OCI-LY7 (cell line): ENCODE measurements at regions of chr11 and their contacts with region 1.

Region 1: DNA sequence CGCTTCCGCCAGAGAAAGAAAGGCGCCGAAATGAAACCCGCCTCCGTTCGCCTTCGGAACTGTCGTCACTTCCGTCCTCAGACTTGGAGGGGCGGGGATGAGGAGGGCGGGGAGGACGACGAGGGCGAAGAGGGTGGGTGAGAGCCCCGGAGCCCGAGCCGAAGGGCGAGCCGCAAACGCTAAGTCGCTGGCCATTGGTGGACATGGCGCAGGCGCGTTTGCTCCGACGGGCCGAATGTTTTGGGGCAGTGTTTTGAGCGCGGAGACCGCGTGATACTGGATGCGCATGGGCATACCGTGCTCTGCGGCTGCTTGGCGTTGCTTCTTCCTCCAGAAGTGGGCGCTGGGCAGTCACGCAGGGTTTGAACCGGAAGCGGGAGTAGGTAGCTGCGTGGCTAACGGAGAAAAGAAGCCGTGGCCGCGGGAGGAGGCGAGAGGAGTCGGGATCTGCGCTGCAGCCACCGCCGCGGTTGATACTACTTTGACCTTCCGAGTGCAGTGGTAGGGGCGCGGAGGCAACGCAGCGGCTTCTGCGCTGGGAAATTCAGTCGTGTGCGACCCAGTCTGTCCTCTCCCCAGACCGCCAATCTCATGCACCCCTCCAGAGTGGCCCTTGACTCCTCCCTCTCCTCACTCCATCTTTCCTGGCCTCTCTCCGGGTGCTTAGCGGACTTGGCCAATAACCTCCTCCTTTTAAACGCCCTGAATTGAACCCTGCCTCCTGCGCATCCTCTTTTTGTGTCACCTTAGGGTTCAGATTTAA is at the start of gene ATM:
- DNase-seq: peak; percentile 98
- H3K4me3 ChIP-seq: peak within 1 kb of the TSS; percentile 93
- H3K27ac ChIP-seq: peak within 1 kb of the TSS; percentile 90
- H3K4me1 ChIP-seq: peaks cover 40% of the 10 kb centered on the region
- CTCF ChIP-seq: peak; percentile 79
- total RNA-seq, gene ATM: 125 and 147 TPM in 2 replicates

Region 2: DNA sequence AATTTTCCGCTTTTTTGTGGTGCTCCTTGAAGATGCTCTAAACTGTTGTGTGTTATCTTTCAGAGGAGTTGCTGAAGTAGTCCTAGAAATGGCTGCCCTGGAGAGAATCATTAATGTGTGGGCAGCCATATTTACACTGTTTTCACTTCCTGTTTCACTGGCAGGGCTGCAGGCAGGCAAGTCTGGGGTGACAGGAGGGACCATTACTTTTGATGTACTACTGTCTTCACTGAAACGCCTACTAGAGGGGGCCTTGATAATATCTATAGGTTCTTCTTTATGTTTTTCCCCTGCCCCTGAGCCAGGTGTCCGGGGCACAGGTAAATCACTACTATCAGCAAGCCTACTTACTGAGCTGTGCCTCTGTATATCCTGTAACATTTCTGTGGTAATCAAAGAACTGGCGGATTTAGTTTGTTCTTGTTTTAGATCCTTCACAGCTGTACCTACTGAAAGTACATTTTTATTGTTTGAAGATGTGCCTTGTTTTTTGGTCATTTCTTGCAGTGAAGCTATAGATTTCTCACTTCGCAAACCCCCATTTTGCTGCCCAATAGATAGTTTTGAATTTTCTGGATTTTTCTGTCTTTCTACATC is 61.8 kb before region 1 on chr11:
- CTCF ChIA-PET with region 1: no interaction called
- POLR2A ChIA-PET with region 1: no interaction called
- intact Hi-C with region 1: loop called (anchors 1 kb)
- DNase-seq: peak; percentile 89
- H3K4me3 ChIP-seq: peak overlapping the region; percentile 30
- H3K27ac ChIP-seq: peak overlapping the region; percentile 88
- H3K4me1 ChIP-seq: peaks cover 46% of the 10 kb centered on the region
- CTCF ChIP-seq: peak; percentile 58

Region 3: DNA sequence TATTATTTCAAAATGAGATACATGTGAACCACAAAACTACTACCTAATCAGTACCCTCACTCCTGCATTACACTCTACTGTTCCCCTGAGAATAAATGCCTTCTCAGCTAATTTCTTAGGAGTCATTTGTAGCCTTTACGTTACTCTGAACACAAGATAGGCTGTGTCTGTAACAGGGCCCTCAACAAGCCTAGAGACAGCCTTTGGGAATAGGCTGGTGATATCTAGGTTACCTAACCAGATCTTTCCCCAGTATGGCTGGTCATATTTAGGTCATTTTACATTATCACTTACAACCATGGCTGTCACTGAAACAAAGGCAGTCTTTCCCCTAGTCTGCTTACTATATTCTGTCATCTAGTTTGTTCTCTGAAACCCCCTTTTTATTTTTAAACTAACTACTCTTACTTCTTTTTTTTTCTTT is 14.2 kb after region 1 on chr11:
- CTCF ChIA-PET with region 1: no interaction called
- POLR2A ChIA-PET with region 1: interaction called, 58 read pairs
- intact Hi-C with region 1: loop called (anchors 1 kb)
- DNase-seq: peak; percentile 19
- H3K4me3 ChIP-seq: peak overlapping the region; percentile 59
- H3K27ac ChIP-seq: peak overlapping the region; percentile 96
- H3K4me1 ChIP-seq: peaks cover 31% of the 10 kb centered on the region
- CTCF ChIP-seq: no peak

Region 4: GRCh38 chr11:108467091-108467823 is 244.4 kb after region 1 on chr11 and contains the start of gene C11orf65:
- CTCF ChIA-PET with region 1: no interaction called
- POLR2A ChIA-PET with region 1: no interaction called
- intact Hi-C with region 1: loop called (anchors 2 kb)
- DNase-seq: peak; percentile 95
- H3K4me3 ChIP-seq: peak within 1 kb of the TSS; percentile 89
- H3K27ac ChIP-seq: peak within 1 kb of the TSS; percentile 35
- H3K4me1 ChIP-seq: peaks cover 11% of the 10 kb centered on the region
- CTCF ChIP-seq: no peak
- total RNA-seq, gene C11orf65: 0.15 and 0.98 TPM in 2 replicates

Region 5: GRCh38 chr11:108654994-108655631 is 432.2 kb after region 1 on chr11:
- CTCF ChIA-PET with region 1: interaction called, 5 read pairs
- POLR2A ChIA-PET with region 1: no interaction called
- intact Hi-C with region 1: loop called (anchors 2 kb)
- DNase-seq: peak; percentile 70
- H3K4me3 ChIP-seq: no peak overlapping the region
- H3K27ac ChIP-seq: no peak overlapping the region
- H3K4me1 ChIP-seq: peaks cover 34% of the 10 kb centered on the region
- CTCF ChIP-seq: peak; percentile 74